ENCODE measurements at regions of chr3 and their contacts with region 1.

Region 1: DNA sequence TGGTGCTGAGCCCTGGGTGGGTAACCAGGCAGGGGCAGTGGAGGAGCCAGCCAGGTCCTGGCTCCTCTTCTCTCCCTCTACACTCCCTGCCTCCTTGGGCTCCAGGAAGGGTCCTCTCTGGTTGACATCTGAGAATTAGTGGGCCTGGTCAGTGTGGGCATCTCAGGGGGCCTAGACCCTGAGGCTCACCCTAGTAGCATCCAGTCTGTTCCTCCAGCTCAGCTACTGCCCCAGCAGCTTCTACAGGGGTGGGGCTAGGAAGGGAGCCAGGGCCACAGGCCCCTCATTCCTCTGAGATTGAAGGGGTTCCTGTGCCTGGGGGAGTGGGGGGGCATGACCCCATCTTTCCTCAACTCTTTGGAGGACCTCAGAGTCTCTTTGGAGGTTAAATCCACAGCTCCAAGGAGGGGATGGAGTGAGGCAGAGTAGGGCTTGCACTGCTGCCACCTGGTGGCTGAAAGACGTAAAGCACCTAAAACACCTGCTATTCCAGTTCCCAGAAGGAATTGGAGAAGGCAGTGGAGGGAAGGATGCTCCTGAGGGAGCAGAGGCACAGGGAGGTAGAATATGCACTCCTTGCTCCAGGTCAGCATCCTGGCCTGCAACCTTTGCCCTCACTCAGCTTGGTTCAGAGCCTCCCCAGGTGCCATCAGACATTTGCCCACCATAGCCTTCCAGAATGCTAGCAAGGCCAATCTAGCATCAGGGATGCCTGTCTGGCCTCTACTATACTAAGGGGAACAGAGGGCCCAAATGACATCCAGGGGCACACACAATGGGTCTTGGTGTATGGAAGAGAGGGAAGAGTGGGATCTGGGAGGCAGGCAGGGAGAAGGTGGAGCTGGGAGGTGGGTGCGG is 25.1 kb downstream of the C3orf18 start:
- DNase-seq: peak; percentile 56
- H3K4me3 ChIP-seq: no peak overlapping the region
- H3K27ac ChIP-seq: no peak overlapping the region
- H3K4me1 ChIP-seq: no peaks in the 10 kb centered on the region
- CTCF ChIP-seq: peak; percentile 95

Region 2: DNA sequence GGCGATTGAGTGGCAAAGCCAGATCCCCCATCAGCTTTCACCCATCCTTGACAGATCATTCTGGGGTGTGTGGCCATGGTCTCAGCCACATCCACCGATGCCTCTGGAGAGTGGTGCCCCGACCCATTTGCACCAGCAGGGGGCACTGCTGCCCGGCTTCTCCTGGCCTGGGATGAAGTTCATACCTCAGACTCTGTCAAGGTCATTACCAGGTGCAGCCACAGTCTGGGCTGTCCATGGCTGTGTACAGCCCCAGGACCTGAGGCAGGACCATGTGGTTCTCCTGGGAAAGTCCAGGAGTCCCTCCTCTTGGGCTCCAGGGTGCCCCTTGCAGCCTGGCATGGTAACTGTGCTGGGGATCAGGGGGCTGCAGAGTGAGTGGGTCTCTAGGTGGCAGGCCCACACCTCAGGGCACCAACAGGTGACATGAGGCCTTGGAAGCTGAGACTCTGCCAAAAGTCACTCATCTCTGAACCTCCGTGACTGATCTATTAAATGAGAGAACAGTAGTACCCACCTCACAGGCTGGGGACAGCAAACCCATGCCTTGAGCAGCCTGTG is 106.2 kb before region 1 on chr3:
- CTCF ChIA-PET with region 1: no interaction called
- POLR2A ChIA-PET with region 1: no interaction called
- intact Hi-C with region 1: loop called (anchors 1 kb)
- DNase-seq: peak; percentile 62
- H3K4me3 ChIP-seq: no peak overlapping the region
- H3K27ac ChIP-seq: no peak overlapping the region
- H3K4me1 ChIP-seq: no peaks in the 10 kb centered on the region
- CTCF ChIP-seq: peak; percentile 90

Region 3: GRCh38 chr3:50604949-50605588 is 62.7 kb after region 1 on chr3:
- CTCF ChIA-PET with region 1: no interaction called
- POLR2A ChIA-PET with region 1: no interaction called
- intact Hi-C with region 1: no loop called
- DNase-seq: peak; percentile 14
- H3K4me3 ChIP-seq: no peak overlapping the region
- H3K27ac ChIP-seq: no peak overlapping the region
- H3K4me1 ChIP-seq: no peaks in the 10 kb centered on the region
- CTCF ChIP-seq: no peak

Measured in OCI-LY7 (cell line).